A549 (cell line): ENCODE measurements at regions of chr1 and their contacts with region 1.

Region 1: GRCh38 chr1:183580281-183580682 is 10.0 kb downstream of the NCF2 start:
- DNase-seq: peak; percentile 71 to 86
- ATAC-seq: peak; percentile 88 to 92
- H3K4me3 ChIP-seq: no peak overlapping the region
- H3K27ac ChIP-seq: no peak overlapping the region; a peak in 1 of 6 replicates
- H3K4me1 ChIP-seq: no peaks in the 10 kb centered on the region
- CTCF ChIP-seq: peak; percentile 30; the same call in 2 of the 3 replicates
- EP300 ChIP-seq: no peak
- POLR2A ChIP-seq: no peak
- RAD21 ChIP-seq: peak; percentile 49 to 65

Region 2: GRCh38 chr1:183471743-183472487 is 108.4 kb before region 1 on chr1:
- CTCF ChIA-PET with region 1: interaction called, 4 read pairs
- POLR2A ChIA-PET with region 1: interaction called, 10 read pairs
- DNase-seq: peak; percentile 84 to 99
- ATAC-seq: peak; percentile 84
- H3K4me3 ChIP-seq: peak overlapping the region; percentile 87
- H3K27ac ChIP-seq: peak overlapping the region; percentile 95 to 96
- H3K4me1 ChIP-seq: peaks cover 49% of the 10 kb centered on the region
- CTCF ChIP-seq: no peak
- EP300 ChIP-seq: no peak
- POLR2A ChIP-seq: peak; percentile 35; the same call in 1 of the 2 replicates
- RAD21 ChIP-seq: 0 out of 5 replicates have a peak, but pooled peaks of 1 of the 2 experiments have one; percentile 6

Region 3: DNA sequence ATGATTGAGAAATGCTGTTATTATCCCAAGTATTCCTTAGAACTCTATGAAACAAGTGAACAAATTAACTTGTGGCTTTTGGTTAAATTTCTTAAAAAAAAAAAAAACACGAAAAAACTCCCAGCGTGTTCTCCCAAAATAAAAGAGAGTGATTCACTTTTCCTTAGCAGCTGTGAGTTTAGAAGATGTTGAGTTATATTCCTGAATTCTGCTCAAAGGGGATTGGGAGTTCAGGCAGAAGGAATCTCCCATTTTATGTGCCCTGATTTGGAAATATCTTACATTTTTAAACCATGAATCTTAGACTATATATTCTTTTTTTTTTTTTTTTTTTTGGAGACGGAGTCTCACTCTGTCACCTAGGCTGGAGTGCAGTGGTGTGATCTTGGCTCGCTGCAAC is 73.7 kb before region 1 on chr1:
- CTCF ChIA-PET with region 1: no interaction called
- POLR2A ChIA-PET with region 1: no interaction called
- DNase-seq: no peak
- ATAC-seq: no peak
- H3K4me3 ChIP-seq: no peak overlapping the region
- H3K27ac ChIP-seq: no peak overlapping the region
- H3K4me1 ChIP-seq: peaks cover 14% of the 10 kb centered on the region
- CTCF ChIP-seq: no peak
- EP300 ChIP-seq: no peak
- POLR2A ChIP-seq: no peak
- RAD21 ChIP-seq: no peak

Region 4: GRCh38 chr1:183590244-183591191 is 10.2 kb after region 1 on chr1 and contains the start of gene NCF2:
- CTCF ChIA-PET with region 1: interaction called, 12 read pairs
- POLR2A ChIA-PET with region 1: no interaction called
- DNase-seq: no peak
- ATAC-seq: peak in 1 of 2 experiments; percentile 49; a peak in 1 of 6 replicates
- H3K4me3 ChIP-seq: no peak within 1 kb of the TSS
- H3K27ac ChIP-seq: 0 out of 6 replicates have a peak within 1 kb of the TSS, but pooled peaks of 1 of the 2 experiments have one; percentile 13
- H3K4me1 ChIP-seq: peaks cover 7% of the 10 kb centered on the region; the same call in 2 of the 3 replicates
- CTCF ChIP-seq: no peak
- EP300 ChIP-seq: no peak
- POLR2A ChIP-seq: no peak
- RAD21 ChIP-seq: no peak
- polyA plus RNA-seq, gene NCF2: 4.5 and 5.5 TPM in 2 replicates